Caco-2 (cell line): ENCODE measurements at regions of chr1 and their contacts with region 1.

Region 1: GRCh38 chr1:223748773-223749733 is 36.7 kb downstream of the CAPN2 start:
- DNase-seq: peak in 1 of 2 experiments; percentile 63
- H3K4me3 ChIP-seq: no peak overlapping the region
- H3K4me3 Mint-ChIP-seq: no peak overlapping the region
- H3K27ac Mint-ChIP-seq: no peak overlapping the region
- H3K4me1 ChIP-seq: no peaks in the 10 kb centered on the region
- H3K4me1 Mint-ChIP-seq: peaks cover 23% of the 10 kb centered on the region
- H3K27me3 ChIP-seq: no peaks in the 10 kb centered on the region
- H3K27me3 Mint-ChIP-seq: no peaks in the 10 kb centered on the region
- CTCF ChIP-seq: peak; percentile 71 to 89

Region 2: DNA sequence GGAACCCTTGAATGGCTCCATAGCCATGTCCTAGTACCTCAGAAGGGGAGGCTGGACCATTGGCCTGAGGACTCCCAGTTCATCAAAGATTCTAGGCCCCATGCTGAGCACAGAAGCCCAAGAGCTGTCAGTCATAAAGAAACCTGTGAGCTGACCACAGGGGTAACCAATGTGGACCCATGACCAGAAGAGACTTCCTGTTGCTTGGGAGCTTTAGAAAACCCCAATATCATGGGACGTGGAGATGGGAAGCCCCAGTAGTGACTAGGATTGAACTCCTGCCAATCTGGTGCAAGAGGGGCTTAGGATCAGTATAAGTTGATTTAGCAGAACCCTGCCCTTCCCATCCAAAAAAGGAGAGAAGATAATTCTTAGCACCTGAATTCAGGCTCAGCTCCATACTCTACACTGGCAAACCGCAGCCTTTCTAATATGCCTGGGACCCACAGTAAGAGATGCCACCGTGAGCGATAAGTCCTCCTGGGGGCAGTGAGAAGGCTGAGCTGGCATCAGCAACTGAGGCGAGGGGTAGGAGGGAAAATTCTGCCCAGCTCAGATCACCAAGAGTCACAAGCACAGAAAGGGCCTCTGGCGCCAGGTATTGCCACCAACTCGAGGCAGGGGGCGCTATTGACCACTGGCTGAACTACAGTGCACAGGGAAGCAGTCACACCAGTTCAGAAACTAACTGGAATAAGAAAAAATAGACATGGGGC is 192.5 kb before region 1 on chr1:
- CTCF ChIA-PET with region 1: no interaction called
- POLR2A ChIA-PET with region 1: no interaction called
- intact Hi-C with region 1: no loop called
- DNase-seq: peak; percentile 62 to 69
- H3K4me3 ChIP-seq: no peak overlapping the region
- H3K4me3 Mint-ChIP-seq: no peak overlapping the region
- H3K27ac Mint-ChIP-seq: no peak overlapping the region
- H3K4me1 ChIP-seq: no peaks in the 10 kb centered on the region
- H3K4me1 Mint-ChIP-seq: no peaks in the 10 kb centered on the region
- H3K27me3 ChIP-seq: no peaks in the 10 kb centered on the region
- H3K27me3 Mint-ChIP-seq: no peaks in the 10 kb centered on the region
- CTCF ChIP-seq: peak; percentile 57 to 70

Region 3: DNA sequence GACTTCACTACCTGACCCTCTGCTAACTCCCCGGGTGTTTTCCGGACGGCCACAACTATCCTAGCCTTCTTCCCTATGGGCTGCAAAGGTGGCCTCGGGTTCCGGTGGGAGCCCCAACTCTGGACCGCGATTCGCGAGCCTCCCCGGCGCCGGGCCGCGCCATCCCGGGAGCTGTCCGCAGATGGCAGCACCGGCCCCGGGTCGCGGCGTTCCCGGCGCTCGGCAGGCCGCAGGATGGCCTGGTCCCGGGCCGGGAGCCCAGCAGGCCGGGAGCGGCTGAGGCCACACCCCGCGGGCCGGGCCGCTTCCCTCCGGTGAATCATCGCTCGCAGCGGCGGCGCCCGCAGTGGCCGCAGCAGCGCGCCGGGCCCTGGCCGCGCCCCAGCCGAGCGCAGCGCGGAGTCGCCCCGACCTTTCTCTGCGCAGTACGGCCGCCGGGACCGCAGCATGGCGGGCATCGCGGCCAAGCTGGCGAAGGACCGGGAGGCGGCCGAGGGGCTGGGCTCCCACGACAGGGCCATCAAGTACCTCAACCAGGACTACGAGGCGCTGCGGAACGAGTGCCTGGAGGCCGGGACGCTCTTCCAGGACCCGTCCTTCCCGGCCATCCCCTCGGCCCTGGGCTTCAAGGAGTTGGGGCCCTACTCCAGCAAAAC is 36.7 kb before region 1 on chr1 and contains the start of gene CAPN2:
- CTCF ChIA-PET with region 1: interaction called, 6 read pairs
- POLR2A ChIA-PET with region 1: interaction called, 5 read pairs
- intact Hi-C with region 1: loop called (anchors 1 kb)
- DNase-seq: peak; percentile 69 to 91
- H3K4me3 ChIP-seq: peak within 1 kb of the TSS; percentile 97
- H3K4me3 Mint-ChIP-seq: peak within 1 kb of the TSS; percentile 73
- H3K27ac Mint-ChIP-seq: peak within 1 kb of the TSS; percentile 14
- H3K4me1 ChIP-seq: peaks cover 82% of the 10 kb centered on the region
- H3K4me1 Mint-ChIP-seq: peaks cover 54% of the 10 kb centered on the region
- H3K27me3 ChIP-seq: no peaks in the 10 kb centered on the region
- H3K27me3 Mint-ChIP-seq: no peaks in the 10 kb centered on the region
- CTCF ChIP-seq: peak; percentile 45 to 63
- total RNA-seq, gene CAPN2: 151 and 157 TPM in 2 replicates